Caco-2 (cell line): ENCODE measurements at regions of chr18 and their contacts with region 1.

Region 1: GRCh38 chr18:53698907-53699306 is 525.6 kb downstream of the MBD2 start:
- DNase-seq: peak in 1 of 2 experiments; percentile 18
- H3K4me3 ChIP-seq: no peak overlapping the region
- H3K4me3 Mint-ChIP-seq: no peak overlapping the region
- H3K27ac Mint-ChIP-seq: no peak overlapping the region
- H3K4me1 ChIP-seq: no peaks in the 10 kb centered on the region
- H3K4me1 Mint-ChIP-seq: no peaks in the 10 kb centered on the region
- H3K27me3 ChIP-seq: no peaks in the 10 kb centered on the region
- H3K27me3 Mint-ChIP-seq: no peaks in the 10 kb centered on the region
- CTCF ChIP-seq: peak; percentile 34 to 53

Region 2: GRCh38 chr18:53864770-53865169 is 165.9 kb after region 1 on chr18:
- CTCF ChIA-PET with region 1: no interaction called
- POLR2A ChIA-PET with region 1: no interaction called
- intact Hi-C with region 1: loop called (anchors 1 kb)
- DNase-seq: no peak
- H3K4me3 ChIP-seq: no peak overlapping the region
- H3K4me3 Mint-ChIP-seq: no peak overlapping the region
- H3K27ac Mint-ChIP-seq: no peak overlapping the region
- H3K4me1 ChIP-seq: no peaks in the 10 kb centered on the region
- H3K4me1 Mint-ChIP-seq: no peaks in the 10 kb centered on the region
- H3K27me3 ChIP-seq: no peaks in the 10 kb centered on the region
- H3K27me3 Mint-ChIP-seq: peaks cover 4% of the 10 kb centered on the region
- CTCF ChIP-seq: no peak

Region 3: GRCh38 chr18:53886058-53886457 is 187.2 kb after region 1 on chr18:
- CTCF ChIA-PET with region 1: no interaction called
- POLR2A ChIA-PET with region 1: no interaction called
- intact Hi-C with region 1: no loop called
- DNase-seq: no peak
- H3K4me3 ChIP-seq: no peak overlapping the region
- H3K4me3 Mint-ChIP-seq: no peak overlapping the region
- H3K27ac Mint-ChIP-seq: no peak overlapping the region
- H3K4me1 ChIP-seq: no peaks in the 10 kb centered on the region; the same call in 1 of the 2 replicates
- H3K4me1 Mint-ChIP-seq: peaks cover 7% of the 10 kb centered on the region
- H3K27me3 ChIP-seq: no peaks in the 10 kb centered on the region
- H3K27me3 Mint-ChIP-seq: no peaks in the 10 kb centered on the region
- CTCF ChIP-seq: no peak

Region 4: DNA sequence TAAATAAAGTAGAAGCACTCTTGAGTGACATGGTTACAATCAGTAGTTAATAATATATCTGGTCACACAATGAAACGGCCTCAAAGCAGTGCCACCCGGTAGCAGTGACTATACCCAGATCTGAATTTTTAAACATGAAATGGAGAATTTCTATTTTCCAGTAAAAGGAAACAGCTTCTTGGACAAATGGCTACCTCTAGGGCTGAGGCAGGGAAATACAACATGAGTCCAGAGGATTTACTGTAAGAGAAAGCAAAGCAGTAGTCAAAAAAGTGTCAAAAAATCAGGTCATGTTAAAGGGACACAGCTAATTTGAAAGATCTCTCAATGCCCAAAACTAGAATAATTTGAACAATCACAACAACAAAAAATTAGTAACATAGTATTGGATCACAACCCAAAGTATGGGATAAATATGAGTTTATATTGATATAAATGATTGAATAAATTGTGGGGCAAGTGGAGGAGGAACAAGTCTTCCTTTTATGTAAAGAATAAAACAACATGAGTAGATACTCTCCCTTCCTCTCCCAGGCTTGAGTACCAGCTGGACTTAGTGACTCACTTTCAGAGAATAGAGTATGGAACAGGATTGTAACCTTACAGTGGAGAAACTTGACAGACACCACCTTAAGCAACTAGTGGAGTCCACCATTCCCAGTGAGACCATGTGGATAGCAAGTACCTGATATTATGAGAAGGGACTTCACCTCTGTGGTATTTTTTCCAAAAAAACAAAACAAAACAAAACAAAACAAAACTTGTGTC is 344.8 kb after region 1 on chr18:
- CTCF ChIA-PET with region 1: no interaction called
- POLR2A ChIA-PET with region 1: no interaction called
- intact Hi-C with region 1: loop called (anchors 5 kb)
- DNase-seq: no peak
- H3K4me3 ChIP-seq: no peak overlapping the region
- H3K4me3 Mint-ChIP-seq: no peak overlapping the region
- H3K27ac Mint-ChIP-seq: no peak overlapping the region
- H3K4me1 ChIP-seq: no peaks in the 10 kb centered on the region
- H3K4me1 Mint-ChIP-seq: no peaks in the 10 kb centered on the region
- H3K27me3 ChIP-seq: no peaks in the 10 kb centered on the region
- H3K27me3 Mint-ChIP-seq: no peaks in the 10 kb centered on the region
- CTCF ChIP-seq: no peak

Region 5: GRCh38 chr18:54119524-54120019 is 420.7 kb after region 1 on chr18:
- CTCF ChIA-PET with region 1: interaction called, 8 read pairs
- POLR2A ChIA-PET with region 1: no interaction called
- intact Hi-C with region 1: loop called (anchors 1 kb)
- DNase-seq: peak in 1 of 2 experiments; percentile 36
- H3K4me3 ChIP-seq: no peak overlapping the region
- H3K4me3 Mint-ChIP-seq: peak overlapping the region; percentile 70
- H3K27ac Mint-ChIP-seq: no peak overlapping the region
- H3K4me1 ChIP-seq: no peaks in the 10 kb centered on the region
- H3K4me1 Mint-ChIP-seq: no peaks in the 10 kb centered on the region
- H3K27me3 ChIP-seq: no peaks in the 10 kb centered on the region
- H3K27me3 Mint-ChIP-seq: no peaks in the 10 kb centered on the region
- CTCF ChIP-seq: peak; percentile 49 to 58